ENCODE measurements at regions of chrX and their contacts with region 1.

Region 1: GRCh38 chrX:104668550-104668949 is 102.6 kb downstream of the IL1RAPL2 start:
- DNase-seq: peak in 1 of 2 donors; percentile 3
- ATAC-seq: no peak
- H3K4me3 ChIP-seq: no peak overlapping the region
- H3K27ac ChIP-seq: no peak overlapping the region
- H3K4me1 ChIP-seq: no peaks in the 10 kb centered on the region
- H3K27me3 ChIP-seq: peaks cover 0 to 27% (median 0%) of the 10 kb centered on the region in 7 donors
- CTCF ChIP-seq: peak in 4 of 9 donors; percentile 15 to 26 (median 22)

Region 2: GRCh38 chrX:104913348-104913747 is 244.8 kb after region 1 on chrX:
- intact Hi-C with region 1: loop called in 1 of 10 experiments (anchors 10 kb)
- DNase-seq: no peak
- ATAC-seq: no peak
- H3K4me3 ChIP-seq: no peak overlapping the region
- H3K27ac ChIP-seq: no peak overlapping the region
- H3K4me1 ChIP-seq: no peaks in the 10 kb centered on the region
- H3K27me3 ChIP-seq: peaks cover 0 to 26% (median 0%) of the 10 kb centered on the region in 7 donors
- CTCF ChIP-seq: peak in 7 of 9 donors; percentile 16 to 47 (median 30)

Region 3: DNA sequence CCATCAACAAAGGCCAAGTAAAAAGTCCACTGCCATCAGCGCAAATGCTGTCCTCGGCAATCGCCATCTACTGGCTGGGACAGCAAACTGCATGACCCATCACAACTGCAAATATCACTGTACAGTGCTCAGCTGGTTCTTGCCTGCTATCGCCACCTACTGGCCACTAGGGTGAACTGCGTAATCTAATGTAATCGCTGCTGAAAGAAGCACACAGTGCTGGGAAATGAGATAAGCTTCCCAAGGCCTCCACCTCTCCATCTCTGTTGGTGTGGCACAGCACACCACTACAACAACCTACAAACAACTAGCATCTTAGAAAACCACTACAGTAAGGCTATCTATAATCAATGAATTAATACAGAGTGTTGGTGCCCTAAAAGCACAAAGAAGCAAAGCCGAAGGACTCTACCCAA is 253.7 kb after region 1 on chrX:
- intact Hi-C with region 1: loop called in 3 of 10 experiments (anchors 5 to 10 kb)
- DNase-seq: peak; percentile 13 to 17
- ATAC-seq: peak in 6 of 8 donors; percentile 28 to 79 (median 58)
- H3K4me3 ChIP-seq: no peak overlapping the region
- H3K27ac ChIP-seq: no peak overlapping the region
- H3K4me1 ChIP-seq: no peaks in the 10 kb centered on the region
- H3K27me3 ChIP-seq: peaks cover 0 to 9% (median 0%) of the 10 kb centered on the region in 7 donors
- CTCF ChIP-seq: peak; percentile 46 to 93 (median 75)